Endothelial cell of umbilical vein (primary cell): ENCODE measurements at regions of chr1 and their contacts with region 1.

Region 1: DNA sequence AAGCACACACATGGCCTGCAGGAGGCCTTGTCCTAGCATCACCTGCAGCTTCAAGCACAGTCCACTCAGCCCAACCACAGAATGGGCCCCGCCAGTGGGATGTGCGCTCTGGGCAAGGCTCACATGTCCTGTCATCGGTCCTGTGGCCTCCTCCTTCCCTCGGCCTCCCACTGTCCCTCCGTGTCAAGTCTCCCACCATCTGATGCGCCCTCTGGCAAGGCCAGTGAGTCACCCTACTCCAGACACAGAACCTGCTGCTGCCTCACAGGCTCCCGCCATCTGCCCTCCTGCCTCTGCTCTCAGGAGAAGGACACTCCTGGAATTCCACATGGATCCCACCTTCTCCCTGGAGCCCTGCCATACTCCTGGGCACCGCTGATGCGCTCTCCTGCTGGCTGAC is 14.2 kb downstream of the KCNAB2 start:
- DNase-seq: no peak
- H3K4me3 ChIP-seq: no peak overlapping the region
- H3K27ac ChIP-seq: no peak overlapping the region
- H3K4me1 ChIP-seq: peaks cover 10% of the 10 kb centered on the region
- H3K27me3 ChIP-seq: no peaks in the 10 kb centered on the region
- CTCF ChIP-seq: no peak
- POLR2A ChIP-seq: no peak

Region 2: GRCh38 chr1:5949085-5949760 is 110.6 kb before region 1 on chr1:
- CTCF ChIA-PET with region 1: no interaction called
- POLR2A ChIA-PET with region 1: no interaction called
- dilution Hi-C with region 1: no loop called
- intact Hi-C with region 1: no loop called
- DNase-seq: no peak
- H3K4me3 ChIP-seq: no peak overlapping the region
- H3K27ac ChIP-seq: no peak overlapping the region
- H3K4me1 ChIP-seq: no peaks in the 10 kb centered on the region
- H3K27me3 ChIP-seq: no peaks in the 10 kb centered on the region
- CTCF ChIP-seq: peak in 1 of 2 donors; percentile 7
- POLR2A ChIP-seq: no peak

Region 3: GRCh38 chr1:6033986-6034749 is 25.7 kb before region 1 on chr1:
- CTCF ChIA-PET with region 1: interaction called, 14 read pairs
- POLR2A ChIA-PET with region 1: no interaction called
- dilution Hi-C with region 1: no loop called
- intact Hi-C with region 1: no loop called
- DNase-seq: peak; percentile 30
- H3K4me3 ChIP-seq: no peak overlapping the region
- H3K27ac ChIP-seq: no peak overlapping the region
- H3K4me1 ChIP-seq: no peaks in the 10 kb centered on the region
- H3K27me3 ChIP-seq: peaks cover 0 to 2% of the 10 kb centered on the region in 2 experiments
- CTCF ChIP-seq: peak; percentile 55 to 82
- POLR2A ChIP-seq: no peak

Region 4: DNA sequence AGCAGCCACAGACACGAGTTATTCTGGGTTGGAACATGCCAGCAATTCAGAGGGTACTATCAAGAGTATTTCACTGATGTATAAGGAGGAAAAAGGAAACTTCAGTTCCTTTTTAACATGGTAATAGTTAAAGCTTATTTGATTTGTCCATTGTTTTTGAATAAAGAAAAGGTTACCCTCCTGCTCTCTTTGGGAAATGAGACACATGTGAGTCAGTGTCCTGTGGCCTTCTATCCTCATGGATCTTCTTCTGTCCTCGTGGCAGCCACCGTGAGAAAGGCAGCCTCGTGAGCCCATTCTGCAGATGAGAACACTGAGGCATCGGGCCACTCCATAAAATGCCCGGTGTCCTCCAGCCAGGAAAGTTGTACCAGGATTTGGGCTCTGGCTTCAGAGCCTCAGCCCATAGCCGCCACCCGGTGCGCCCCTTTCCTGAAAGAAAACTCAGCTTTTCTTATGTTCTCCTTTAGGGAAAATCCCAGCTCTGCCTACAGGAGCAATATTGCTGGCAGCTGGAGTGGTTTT is 10.6 kb after region 1 on chr1:
- CTCF ChIA-PET with region 1: interaction called, 4 read pairs
- POLR2A ChIA-PET with region 1: no interaction called
- dilution Hi-C with region 1: no loop called
- intact Hi-C with region 1: loop called (anchors 1 kb)
- DNase-seq: peak; percentile 33
- H3K4me3 ChIP-seq: no peak overlapping the region
- H3K27ac ChIP-seq: no peak overlapping the region
- H3K4me1 ChIP-seq: peaks cover 7% of the 10 kb centered on the region
- H3K27me3 ChIP-seq: no peaks in the 10 kb centered on the region
- CTCF ChIP-seq: no peak
- POLR2A ChIP-seq: no peak

Region 5: DNA sequence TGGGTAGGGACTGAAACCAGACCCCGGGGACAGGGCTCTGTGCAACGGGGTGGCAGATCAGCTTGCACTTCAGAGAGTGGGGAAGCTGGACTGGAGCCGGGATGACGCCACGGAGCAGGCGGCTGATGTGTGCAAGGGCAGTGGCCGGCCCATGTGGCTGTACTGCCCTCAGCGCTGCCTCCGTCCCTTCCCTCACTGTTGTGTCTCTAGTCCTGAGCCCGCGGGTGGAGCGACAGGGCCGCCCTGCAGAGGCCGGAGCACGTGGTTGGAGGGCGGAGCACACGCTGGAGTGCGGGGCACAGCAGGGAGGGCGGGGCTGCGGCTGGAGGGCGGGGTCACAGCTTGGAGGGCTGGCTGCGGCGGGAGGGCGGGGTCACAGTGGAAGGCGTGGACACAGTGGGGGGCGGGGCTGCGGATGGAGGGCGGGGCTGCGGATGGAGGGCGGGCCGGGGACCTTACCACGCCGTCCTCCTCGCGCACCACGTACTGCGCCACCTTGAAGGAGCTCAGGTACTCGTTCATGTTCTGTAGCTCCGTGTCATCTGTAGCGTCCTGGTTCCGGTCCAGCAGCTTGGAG is 67.8 kb after region 1 on chr1:
- CTCF ChIA-PET with region 1: no interaction called
- POLR2A ChIA-PET with region 1: interaction called, 11 read pairs
- dilution Hi-C with region 1: no loop called
- intact Hi-C with region 1: no loop called
- DNase-seq: peak; percentile 56
- H3K4me3 ChIP-seq: no peak overlapping the region
- H3K27ac ChIP-seq: no peak overlapping the region
- H3K4me1 ChIP-seq: no peaks in the 10 kb centered on the region
- H3K27me3 ChIP-seq: no peaks in the 10 kb centered on the region
- CTCF ChIP-seq: no peak
- POLR2A ChIP-seq: no peak

Region 6: DNA sequence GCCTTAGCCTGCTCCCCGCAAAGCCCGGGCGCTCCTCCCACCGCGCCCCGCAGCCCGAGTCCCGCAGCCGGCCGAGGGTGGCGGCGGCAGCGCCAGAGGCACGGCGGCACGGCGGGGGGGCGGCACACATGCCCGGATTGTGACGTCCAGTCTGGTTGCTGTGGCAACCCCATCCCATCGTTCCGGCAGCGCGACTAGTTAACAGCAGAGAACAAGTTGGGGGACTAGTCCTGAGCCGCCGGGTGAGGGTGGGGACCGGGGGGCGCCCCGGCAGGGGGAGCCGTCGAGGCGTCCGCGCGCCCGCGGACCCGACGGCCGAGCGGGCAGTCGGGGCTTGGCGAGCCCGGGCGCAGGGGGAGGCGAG is 120.3 kb after region 1 on chr1 and contains the start of gene CHD5:
- CTCF ChIA-PET with region 1: no interaction called
- POLR2A ChIA-PET with region 1: no interaction called
- dilution Hi-C with region 1: no loop called
- intact Hi-C with region 1: loop called (anchors 2 kb)
- DNase-seq: no peak
- H3K4me3 ChIP-seq: no peak within 1 kb of the TSS
- H3K27ac ChIP-seq: no peak within 1 kb of the TSS
- H3K4me1 ChIP-seq: no peaks in the 10 kb centered on the region
- H3K27me3 ChIP-seq: peaks cover 27 to 36% of the 10 kb centered on the region in 2 experiments
- CTCF ChIP-seq: peak in 1 of 2 donors; percentile 14
- POLR2A ChIP-seq: no peak
- total RNA-seq, gene CHD5: 0.11 and 0.14 TPM in 2 replicates

Region 7: GRCh38 chr1:6235296-6235677 is 175.4 kb after region 1 on chr1:
- CTCF ChIA-PET with region 1: no interaction called
- POLR2A ChIA-PET with region 1: no interaction called
- dilution Hi-C with region 1: no loop called
- intact Hi-C with region 1: loop called (anchors 2 kb)
- DNase-seq: no peak
- H3K4me3 ChIP-seq: peak overlapping the region; percentile 66 to 80 (median 68)
- H3K27ac ChIP-seq: peak overlapping the region; percentile 6
- H3K4me1 ChIP-seq: peaks cover 11% of the 10 kb centered on the region
- H3K27me3 ChIP-seq: peaks cover 8 to 9% of the 10 kb centered on the region in 2 experiments
- CTCF ChIP-seq: no peak
- POLR2A ChIP-seq: no peak